H1 (cell line): ENCODE measurements at regions of chr14 and their contacts with region 1.

Region 1: DNA sequence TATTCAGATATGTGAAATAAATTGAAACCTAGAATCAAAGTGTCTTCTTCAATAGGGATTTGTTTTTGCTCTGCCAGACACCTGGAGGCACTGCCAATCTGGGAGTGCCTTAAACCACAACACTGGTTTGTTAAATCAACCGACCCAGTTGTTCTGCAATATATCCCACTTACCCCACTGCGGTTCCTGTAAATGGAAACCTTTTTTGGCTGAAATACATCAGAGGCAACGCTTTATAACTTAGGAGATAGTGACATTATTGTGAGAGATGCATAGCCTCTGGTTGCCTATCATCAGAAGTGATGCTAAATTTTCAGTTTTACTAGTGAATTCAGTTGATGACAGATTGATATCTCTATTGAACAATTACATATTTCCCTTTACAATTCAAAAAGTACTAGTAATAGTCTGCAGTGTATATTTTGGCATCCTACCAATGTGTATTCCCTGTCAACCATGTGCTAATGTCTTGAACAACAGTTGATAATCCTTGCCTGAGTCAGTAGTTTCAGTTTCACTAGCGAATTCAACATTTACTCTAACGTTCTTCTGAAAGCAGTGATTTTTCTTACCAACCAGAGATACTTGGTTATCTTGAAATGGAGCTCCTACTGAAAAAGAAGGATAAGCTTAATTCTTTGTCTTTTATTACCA is 30.5 kb downstream of the PPP2R5C start:
- DNase-seq: no peak
- H3K4me3 ChIP-seq: no peak overlapping the region
- H3K27ac ChIP-seq: no peak overlapping the region
- H3K4me1 ChIP-seq: no peaks in the 10 kb centered on the region
- H3K27me3 ChIP-seq: no peaks in the 10 kb centered on the region
- CTCF ChIP-seq: no peak
- EP300 ChIP-seq: no peak
- POLR2A ChIP-seq: no peak
- RAD21 ChIP-seq: no peak

Region 2: GRCh38 chr14:101772817-101773216 is 19.2 kb before region 1 on chr14:
- CTCF ChIA-PET with region 1: interaction called, 16 read pairs
- POLR2A ChIA-PET with region 1: no interaction called
- DNase-seq: no peak
- H3K4me3 ChIP-seq: no peak overlapping the region
- H3K27ac ChIP-seq: no peak overlapping the region
- H3K4me1 ChIP-seq: peaks cover 0 to 3% (median 0%) of the 10 kb centered on the region in 4 experiments; a peak in 2 of 7 replicates
- H3K27me3 ChIP-seq: 0 out of 7 replicates have a peak, but pooled peaks cover 0 to 3% (median 0%) of the 10 kb centered on the region in 4 experiments
- CTCF ChIP-seq: no peak
- EP300 ChIP-seq: no peak
- POLR2A ChIP-seq: no peak
- RAD21 ChIP-seq: no peak

Region 3: GRCh38 chr14:101809671-101810514 is 17.8 kb after region 1 on chr14:
- CTCF ChIA-PET with region 1: interaction called, 4 read pairs
- POLR2A ChIA-PET with region 1: interaction called, 13 read pairs
- DNase-seq: peak; percentile 63 to 75
- H3K4me3 ChIP-seq: peak overlapping the region; percentile 82 to 99 (median 91)
- H3K27ac ChIP-seq: peak overlapping the region; percentile 98
- H3K4me1 ChIP-seq: peaks cover 0 to 10% (median 6%) of the 10 kb centered on the region in 4 experiments
- H3K27me3 ChIP-seq: no peaks in the 10 kb centered on the region
- CTCF ChIP-seq: no peak
- EP300 ChIP-seq: peak in 1 of 2 experiments; percentile 64; a peak in 1 of 3 replicates
- POLR2A ChIP-seq: peak; percentile 74 to 87
- RAD21 ChIP-seq: no peak